ENCODE measurements at regions of chr7 and their contacts with region 1.

Region 1: DNA sequence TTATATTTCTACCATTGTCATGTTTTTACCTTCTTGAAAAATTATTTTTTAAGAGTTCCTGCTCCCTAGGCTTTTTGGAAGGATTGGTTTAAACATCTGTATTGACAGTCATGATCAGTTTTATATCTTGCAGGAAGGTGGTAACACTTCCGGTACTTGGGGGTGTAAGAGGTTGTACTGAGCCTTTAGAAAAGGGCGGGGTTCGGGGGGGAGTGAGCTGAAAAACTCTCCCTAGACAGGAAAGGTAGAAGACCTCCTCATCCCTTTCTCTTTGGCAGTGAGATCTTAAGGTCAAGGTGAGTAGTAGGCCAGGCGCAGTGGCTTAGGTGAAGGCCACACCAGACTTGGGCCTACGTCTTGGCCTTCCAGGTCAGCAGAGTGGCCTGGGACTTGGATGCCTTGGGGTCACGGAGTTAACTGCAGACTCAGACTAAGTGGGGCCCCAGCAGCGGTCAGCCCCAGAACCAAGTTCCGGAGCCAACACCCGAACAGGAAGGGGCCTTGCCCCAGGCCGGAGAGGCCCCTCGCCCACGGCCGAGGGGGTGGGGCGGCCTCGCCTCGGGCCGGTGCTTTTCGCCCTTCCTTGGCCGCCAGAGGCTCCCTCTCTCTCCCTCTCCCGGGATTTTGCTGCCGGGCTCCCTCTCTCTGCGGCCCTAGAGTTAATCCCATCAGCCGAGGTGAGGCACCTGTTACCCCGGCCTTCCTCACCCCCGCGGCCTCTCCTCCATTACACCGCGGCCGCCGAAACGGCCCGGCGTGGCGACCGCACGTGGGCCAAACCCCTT is at the start of gene PPP1R9A:
- DNase-seq: peak; percentile 43 to 87 (median 72)

Region 2: DNA sequence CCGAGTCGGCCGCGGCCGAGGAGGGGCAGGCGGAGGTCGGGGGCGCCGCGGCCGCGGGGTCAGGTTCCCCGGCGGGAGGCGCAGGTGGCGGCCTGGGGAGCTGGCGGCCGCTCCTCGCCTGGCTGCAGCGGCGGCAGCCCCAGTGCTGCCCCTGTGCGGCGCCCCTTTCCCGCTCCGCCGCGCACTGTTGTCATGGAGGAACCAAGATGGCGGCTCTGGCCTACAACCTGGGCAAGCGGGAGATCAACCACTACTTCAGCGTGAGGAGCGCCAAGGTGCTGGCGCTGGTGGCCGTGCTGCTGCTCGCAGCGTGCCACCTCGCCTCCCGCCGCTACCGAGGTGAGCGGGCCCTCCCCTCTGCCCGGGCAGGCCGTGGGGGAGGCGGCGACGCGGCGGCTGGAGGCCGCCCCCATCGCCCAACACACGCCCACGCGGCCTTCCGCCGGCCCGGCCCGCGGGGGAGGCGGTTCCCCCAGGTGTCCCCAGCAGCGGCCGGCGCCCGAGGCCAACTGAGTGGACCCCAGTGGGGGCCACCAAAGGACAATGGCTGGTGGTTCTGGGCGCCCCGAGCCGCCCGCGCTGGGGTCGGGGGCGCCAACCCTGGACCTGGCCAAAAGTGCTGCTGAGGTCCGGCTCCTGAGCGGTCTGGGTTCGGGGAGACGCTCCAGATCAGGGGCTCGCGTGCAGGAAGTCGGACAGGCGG is 397.2 kb before region 1 on chr7:
- intact Hi-C with region 1: loop called (anchors 5 kb)
- DNase-seq: peak; percentile 22 to 89 (median 76)

Region 3: GRCh38 chr7:94657771-94658693 is 249.2 kb before region 1 on chr7:
- intact Hi-C with region 1: loop called (anchors 10 kb)
- DNase-seq: peak; percentile 77 to 97 (median 93)

Region 4: GRCh38 chr7:94810496-94810895 is 96.7 kb before region 1 on chr7:
- intact Hi-C with region 1: no loop called
- DNase-seq: no peak

Region 5: DNA sequence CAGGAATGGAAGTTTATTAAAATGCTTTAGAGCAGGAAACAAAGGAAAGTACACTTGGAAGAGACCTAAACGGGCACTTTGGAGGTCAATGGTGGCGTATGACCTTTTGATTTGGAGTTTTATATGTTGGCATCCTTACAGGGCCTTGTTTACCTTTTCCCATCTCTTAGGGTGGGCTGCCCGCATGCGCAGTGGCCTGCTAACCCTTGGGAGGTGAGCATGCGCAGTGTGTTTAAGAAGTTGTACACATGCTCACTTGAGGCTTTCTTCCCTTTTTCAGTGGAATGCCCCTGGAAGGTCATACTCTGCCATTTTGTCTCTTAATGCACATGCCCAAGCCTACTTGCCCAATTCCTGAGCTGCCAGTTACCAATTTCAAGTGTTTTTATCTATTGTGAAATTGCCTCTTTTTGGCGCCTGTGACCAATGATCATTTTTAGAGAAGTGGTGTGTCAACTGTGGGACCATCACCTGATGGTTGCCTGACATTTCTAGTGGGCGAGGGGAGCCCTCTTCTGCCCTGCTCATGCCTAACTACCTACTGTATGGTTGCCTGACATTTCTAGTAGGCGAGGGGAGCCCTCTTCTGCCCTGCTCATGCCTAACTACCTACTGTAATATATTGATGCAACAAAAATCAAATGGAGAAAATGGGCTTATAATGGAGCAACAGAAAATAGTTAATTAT is 138.2 kb after region 1 on chr7:
- intact Hi-C with region 1: loop called (anchors 10 kb)
- DNase-seq: peak in 40 of 42 donors; percentile 10 to 82 (median 58)

Region 6: DNA sequence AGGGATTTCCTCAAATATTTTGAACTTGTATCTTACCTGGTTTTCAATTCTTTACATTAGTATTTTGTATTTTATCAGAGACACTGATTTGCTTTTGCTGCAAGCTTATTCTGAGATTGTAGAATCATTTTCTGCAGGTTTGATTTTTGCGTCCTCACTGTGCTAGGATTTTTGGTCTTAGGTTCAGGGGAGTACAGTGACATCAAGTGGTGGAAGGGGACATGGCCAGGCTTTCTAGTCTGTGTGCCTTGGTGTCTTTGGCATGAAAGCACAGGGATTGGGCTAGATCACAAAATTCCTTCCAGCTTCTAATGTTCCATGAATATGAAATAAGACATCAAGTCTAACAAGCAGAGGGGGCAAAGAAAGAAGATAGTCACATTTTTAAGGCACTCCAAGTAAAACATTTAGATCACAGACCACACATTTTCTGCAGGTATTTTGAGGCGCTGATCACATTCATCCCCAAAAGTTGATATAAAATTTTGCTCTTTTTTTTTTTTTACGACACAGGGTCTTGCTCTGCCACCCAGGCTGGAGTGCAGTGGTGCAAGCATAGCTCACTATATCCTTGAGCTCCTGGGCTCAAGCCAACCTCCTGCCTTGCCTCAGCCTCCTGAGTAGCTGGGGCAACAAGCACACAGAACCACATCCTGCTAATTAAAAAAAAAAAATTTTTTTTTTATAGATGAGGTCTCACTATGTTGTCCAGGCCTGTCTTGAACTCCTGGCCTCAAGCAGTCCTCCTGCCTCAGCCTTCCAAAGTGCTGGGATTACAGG is 292.8 kb after region 1 on chr7:
- intact Hi-C with region 1: loop called (anchors 10 kb)
- DNase-seq: peak; percentile 32 to 88 (median 68)